Mammary epithelial cell (primary cell): ENCODE measurements at regions of chr19 and their contacts with region 1.

Region 1: GRCh38 chr19:30649934-30650614 is 277.9 kb downstream of the ZNF536 start:
- DNase-seq: peak; percentile 33
- H3K4me3 ChIP-seq: no peak overlapping the region
- H3K27ac ChIP-seq: no peak overlapping the region
- H3K4me1 ChIP-seq: no peaks in the 10 kb centered on the region
- H3K27me3 ChIP-seq: no peaks in the 10 kb centered on the region
- CTCF ChIP-seq: peak; percentile 76 to 81

Region 2: GRCh38 chr19:29735800-29736199 is 914.3 kb before region 1 on chr19:
- CTCF ChIA-PET with region 1: no interaction called
- dilution Hi-C with region 1: loop called (anchors 10 kb)
- in situ Hi-C with region 1: loop called in 1 of 2 experiments (anchors 25 kb)
- intact Hi-C with region 1: loop called (anchors 1 kb)
- DNase-seq: no peak
- H3K4me3 ChIP-seq: no peak overlapping the region
- H3K27ac ChIP-seq: no peak overlapping the region
- H3K4me1 ChIP-seq: no peaks in the 10 kb centered on the region
- H3K27me3 ChIP-seq: peaks cover 2% of the 10 kb centered on the region
- CTCF ChIP-seq: no peak

Region 3: GRCh38 chr19:29771708-29772414 is 878.2 kb before region 1 on chr19:
- CTCF ChIA-PET with region 1: no interaction called
- dilution Hi-C with region 1: no loop called
- in situ Hi-C with region 1: loop called in 1 of 2 experiments (anchors 25 kb)
- intact Hi-C with region 1: no loop called
- DNase-seq: peak; percentile 30
- H3K4me3 ChIP-seq: no peak overlapping the region
- H3K27ac ChIP-seq: no peak overlapping the region
- H3K4me1 ChIP-seq: no peaks in the 10 kb centered on the region
- H3K27me3 ChIP-seq: no peaks in the 10 kb centered on the region
- CTCF ChIP-seq: peak; percentile 55 to 75

Region 4: GRCh38 chr19:30227661-30228428 is 422.2 kb before region 1 on chr19:
- CTCF ChIA-PET with region 1: no interaction called
- dilution Hi-C with region 1: no loop called
- in situ Hi-C with region 1: no loop called
- intact Hi-C with region 1: loop called (anchors 1 kb)
- DNase-seq: peak; percentile 42
- H3K4me3 ChIP-seq: peak overlapping the region; percentile 37 to 50 (median 41)
- H3K27ac ChIP-seq: no peak overlapping the region
- H3K4me1 ChIP-seq: peaks cover 10% of the 10 kb centered on the region
- H3K27me3 ChIP-seq: peaks cover 45% of the 10 kb centered on the region
- CTCF ChIP-seq: peak; percentile 14 to 30

Region 5: DNA sequence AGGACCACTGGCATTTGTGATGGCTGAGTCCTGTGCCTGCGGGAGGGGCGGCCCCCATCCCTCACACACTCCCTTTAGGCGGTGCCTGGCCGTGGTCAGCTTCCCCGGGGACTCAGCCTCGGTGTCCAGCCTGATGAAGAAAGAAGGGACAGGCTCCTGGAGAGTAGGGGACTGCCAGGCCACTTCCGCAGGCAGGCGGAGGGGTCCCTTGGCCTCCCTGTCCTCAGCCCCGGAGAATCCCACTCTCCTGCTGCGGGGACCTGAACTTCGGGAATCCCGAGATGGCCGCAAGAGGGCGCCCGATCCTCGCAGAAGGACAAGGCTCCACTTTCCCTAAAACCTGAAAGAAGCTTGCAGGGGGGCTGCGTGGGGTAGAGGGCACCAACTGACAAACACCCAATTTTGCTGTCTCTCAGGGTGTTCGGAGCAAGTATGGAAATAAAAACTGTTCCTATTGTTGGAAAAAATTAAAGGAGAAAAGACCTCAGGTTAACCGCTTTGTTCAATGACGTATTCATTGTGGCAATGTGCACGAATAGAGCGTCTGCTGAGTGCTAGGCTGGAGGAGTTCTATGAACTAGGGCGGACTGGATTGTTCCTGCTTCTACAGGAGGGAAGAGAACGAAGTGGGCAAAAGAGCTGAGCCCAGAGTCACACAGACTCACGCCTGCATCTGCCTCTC is 19.4 kb after region 1 on chr19:
- CTCF ChIA-PET with region 1: no interaction called
- dilution Hi-C with region 1: no loop called
- in situ Hi-C with region 1: no loop called
- intact Hi-C with region 1: no loop called
- DNase-seq: peak; percentile 62
- H3K4me3 ChIP-seq: no peak overlapping the region
- H3K27ac ChIP-seq: no peak overlapping the region
- H3K4me1 ChIP-seq: peaks cover 6% of the 10 kb centered on the region
- H3K27me3 ChIP-seq: peaks cover 1% of the 10 kb centered on the region
- CTCF ChIP-seq: peak; percentile 66 to 84

Region 6: GRCh38 chr19:30762651-30763050 is 112.6 kb after region 1 on chr19:
- CTCF ChIA-PET with region 1: no interaction called
- dilution Hi-C with region 1: no loop called
- in situ Hi-C with region 1: no loop called
- intact Hi-C with region 1: no loop called
- DNase-seq: no peak
- H3K4me3 ChIP-seq: no peak overlapping the region
- H3K27ac ChIP-seq: no peak overlapping the region
- H3K4me1 ChIP-seq: no peaks in the 10 kb centered on the region
- H3K27me3 ChIP-seq: no peaks in the 10 kb centered on the region
- CTCF ChIP-seq: no peak

Region 7: GRCh38 chr19:32224371-32225244 is 1574.5 kb after region 1 on chr19:
- CTCF ChIA-PET with region 1: no interaction called
- dilution Hi-C with region 1: no loop called
- in situ Hi-C with region 1: loop called in 1 of 2 experiments (anchors 25 kb)
- intact Hi-C with region 1: no loop called
- DNase-seq: peak; percentile 27
- H3K4me3 ChIP-seq: no peak overlapping the region
- H3K27ac ChIP-seq: no peak overlapping the region
- H3K4me1 ChIP-seq: peaks cover 3% of the 10 kb centered on the region
- H3K27me3 ChIP-seq: peaks cover 4% of the 10 kb centered on the region
- CTCF ChIP-seq: peak; percentile 71 to 86